ENCODE measurements at regions of chr11 and their contacts with region 1.

Region 1: DNA sequence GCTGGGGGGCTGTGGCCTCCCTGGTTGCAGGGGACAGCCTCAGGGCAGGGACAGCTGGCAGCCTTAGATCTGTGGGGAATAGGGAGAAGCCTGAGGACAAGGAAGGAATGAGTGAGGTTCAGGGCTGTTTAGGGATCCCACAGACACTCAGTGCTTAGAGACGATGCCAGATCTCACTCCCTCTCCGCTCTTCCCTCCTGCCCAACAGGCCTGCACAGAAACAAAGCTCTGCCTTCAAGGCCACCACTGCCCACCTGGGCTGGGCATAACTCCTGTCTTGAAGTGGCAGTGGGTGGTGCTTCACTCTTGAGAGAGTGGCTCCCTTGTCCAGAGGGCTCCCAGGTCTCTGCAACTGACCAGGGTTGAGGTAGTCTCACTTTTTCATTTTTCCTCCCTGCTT is 13.1 kb upstream of the CENATAC start:
- DNase-seq: no peak
- H3K4me3 ChIP-seq: no peak overlapping the region
- H3K4me3 Mint-ChIP-seq: no peak overlapping the region
- H3K27ac ChIP-seq: no peak overlapping the region
- H3K27ac Mint-ChIP-seq: no peak overlapping the region
- H3K4me1 ChIP-seq: no peaks in the 10 kb centered on the region
- H3K4me1 Mint-ChIP-seq: no peaks in the 10 kb centered on the region
- H3K27me3 ChIP-seq: no peaks in the 10 kb centered on the region
- H3K27me3 Mint-ChIP-seq: peaks cover 0 to 1% of the 10 kb centered on the region in 2 donors

Region 2: GRCh38 chr11:118632577-118633318 is 352.1 kb before region 1 on chr11:
- CTCF ChIA-PET with region 1: no interaction called
- POLR2A ChIA-PET with region 1: interaction called, 10 read pairs
- DNase-seq: no peak
- H3K4me3 ChIP-seq: no peak overlapping the region
- H3K4me3 Mint-ChIP-seq: no peak overlapping the region
- H3K27ac ChIP-seq: no peak overlapping the region
- H3K27ac Mint-ChIP-seq: no peak overlapping the region
- H3K4me1 ChIP-seq: no peaks in the 10 kb centered on the region
- H3K4me1 Mint-ChIP-seq: peaks cover 0 to 4% (median 0%) of the 10 kb centered on the region in 3 donors
- H3K27me3 ChIP-seq: no peaks in the 10 kb centered on the region
- H3K27me3 Mint-ChIP-seq: peaks cover 0 to under 1% of the 10 kb centered on the region in 2 donors

Region 3: GRCh38 chr11:118971646-118972045 is 13.2 kb before region 1 on chr11 and contains the start of gene FOXR1:
- CTCF ChIA-PET with region 1: no interaction called
- POLR2A ChIA-PET with region 1: no interaction called
- DNase-seq: no peak
- H3K4me3 ChIP-seq: no peak within 1 kb of the TSS
- H3K4me3 Mint-ChIP-seq: no peak within 1 kb of the TSS
- H3K27ac ChIP-seq: no peak within 1 kb of the TSS
- H3K27ac Mint-ChIP-seq: no peak within 1 kb of the TSS
- H3K4me1 ChIP-seq: no peaks in the 10 kb centered on the region
- H3K4me1 Mint-ChIP-seq: no peaks in the 10 kb centered on the region
- H3K27me3 ChIP-seq: no peaks in the 10 kb centered on the region
- H3K27me3 Mint-ChIP-seq: peaks cover 5 to 35% of the 10 kb centered on the region in 2 donors
- total RNA-seq, gene FOXR1: not detected